CD8-positive, alpha-beta T cell (primary cell): ENCODE measurements at regions of chr11 and their contacts with region 1.

Region 1: DNA sequence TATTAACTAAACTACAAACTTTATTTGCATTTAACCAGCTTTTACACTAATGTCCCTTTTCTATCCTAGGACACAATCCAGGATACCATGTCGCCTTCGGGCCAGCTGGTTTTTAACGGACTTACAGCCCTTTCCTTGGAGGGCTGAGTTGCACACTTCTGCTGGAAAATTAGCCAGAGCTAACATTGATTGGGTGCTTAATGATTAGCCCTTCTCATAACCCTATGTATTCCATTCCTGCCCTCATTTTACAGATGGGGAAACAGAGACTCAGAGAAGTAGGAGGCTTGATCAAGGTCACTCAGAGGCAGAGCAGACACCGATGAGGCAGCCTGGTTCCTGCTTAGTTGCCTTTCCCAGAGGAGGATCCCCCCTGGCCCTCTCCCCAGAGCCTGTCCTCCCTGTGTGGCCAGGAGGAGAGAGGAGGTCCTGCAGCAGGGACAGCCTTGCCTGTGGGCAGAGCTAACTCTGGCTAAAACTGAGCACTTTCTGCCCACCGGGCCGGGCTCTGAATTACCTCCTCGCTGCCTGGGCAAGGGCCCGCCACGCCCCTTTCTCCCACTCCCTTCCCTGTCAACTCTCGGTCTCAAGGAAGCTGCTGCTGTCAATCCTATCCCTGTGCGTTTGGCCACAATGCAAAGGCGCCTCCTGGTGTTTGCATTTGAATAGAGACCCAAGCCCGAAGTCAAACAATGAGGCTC is 59.6 kb upstream of the PAX6 start:
- DNase-seq: peak in 4 of 9 experiments; percentile 3 to 32 (median 14)
- ATAC-seq: no peak
- H3K4me3 ChIP-seq: no peak overlapping the region
- H3K4me3 Mint-ChIP-seq: no peak overlapping the region
- H3K27ac ChIP-seq: no peak overlapping the region
- H3K27ac Mint-ChIP-seq: no peak overlapping the region
- H3K4me1 ChIP-seq: no peaks in the 10 kb centered on the region
- H3K4me1 Mint-ChIP-seq: no peaks in the 10 kb centered on the region
- H3K27me3 ChIP-seq: peaks cover 0 to 3% of the 10 kb centered on the region in 2 experiments
- H3K27me3 Mint-ChIP-seq: peaks cover 29% of the 10 kb centered on the region
- CTCF ChIP-seq: no peak

Region 2: GRCh38 chr11:31107062-31107461 is 763.7 kb before region 1 on chr11:
- CTCF ChIA-PET with region 1: no interaction called
- POLR2A ChIA-PET with region 1: no interaction called
- intact Hi-C with region 1: loop called in 1 of 2 experiments (anchors 10 kb)
- DNase-seq: peak in 7 of 9 experiments; percentile 7 to 48 (median 36)
- ATAC-seq: no peak
- H3K4me3 ChIP-seq: no peak overlapping the region
- H3K4me3 Mint-ChIP-seq: no peak overlapping the region
- H3K27ac ChIP-seq: no peak overlapping the region
- H3K27ac Mint-ChIP-seq: no peak overlapping the region
- H3K4me1 ChIP-seq: no peaks in the 10 kb centered on the region
- H3K4me1 Mint-ChIP-seq: no peaks in the 10 kb centered on the region
- H3K27me3 ChIP-seq: no peaks in the 10 kb centered on the region
- H3K27me3 Mint-ChIP-seq: no peaks in the 10 kb centered on the region
- CTCF ChIP-seq: peak; percentile 22

Region 3: GRCh38 chr11:31240338-31240904 is 630.3 kb before region 1 on chr11:
- CTCF ChIA-PET with region 1: interaction called, 7 read pairs
- POLR2A ChIA-PET with region 1: no interaction called
- intact Hi-C with region 1: loop called in 1 of 2 experiments (anchors 5 kb)
- DNase-seq: peak in 4 of 9 experiments; percentile 4 to 49 (median 22)
- ATAC-seq: no peak
- H3K4me3 ChIP-seq: no peak overlapping the region
- H3K4me3 Mint-ChIP-seq: no peak overlapping the region
- H3K27ac ChIP-seq: no peak overlapping the region
- H3K27ac Mint-ChIP-seq: no peak overlapping the region
- H3K4me1 ChIP-seq: no peaks in the 10 kb centered on the region
- H3K4me1 Mint-ChIP-seq: no peaks in the 10 kb centered on the region
- H3K27me3 ChIP-seq: no peaks in the 10 kb centered on the region
- H3K27me3 Mint-ChIP-seq: peaks cover 4% of the 10 kb centered on the region
- CTCF ChIP-seq: peak; percentile 58

Region 4: GRCh38 chr11:31397239-31397834 is 473.4 kb before region 1 on chr11:
- CTCF ChIA-PET with region 1: interaction called, 4 read pairs
- POLR2A ChIA-PET with region 1: no interaction called
- intact Hi-C with region 1: loop called in 1 of 2 experiments (anchors 5 kb)
- DNase-seq: peak in 2 of 9 experiments; percentile 22 to 48
- ATAC-seq: no peak
- H3K4me3 ChIP-seq: no peak overlapping the region
- H3K4me3 Mint-ChIP-seq: no peak overlapping the region
- H3K27ac ChIP-seq: no peak overlapping the region
- H3K27ac Mint-ChIP-seq: no peak overlapping the region
- H3K4me1 ChIP-seq: no peaks in the 10 kb centered on the region
- H3K4me1 Mint-ChIP-seq: no peaks in the 10 kb centered on the region
- H3K27me3 ChIP-seq: no peaks in the 10 kb centered on the region
- H3K27me3 Mint-ChIP-seq: no peaks in the 10 kb centered on the region
- CTCF ChIP-seq: peak; percentile 61

Region 5: DNA sequence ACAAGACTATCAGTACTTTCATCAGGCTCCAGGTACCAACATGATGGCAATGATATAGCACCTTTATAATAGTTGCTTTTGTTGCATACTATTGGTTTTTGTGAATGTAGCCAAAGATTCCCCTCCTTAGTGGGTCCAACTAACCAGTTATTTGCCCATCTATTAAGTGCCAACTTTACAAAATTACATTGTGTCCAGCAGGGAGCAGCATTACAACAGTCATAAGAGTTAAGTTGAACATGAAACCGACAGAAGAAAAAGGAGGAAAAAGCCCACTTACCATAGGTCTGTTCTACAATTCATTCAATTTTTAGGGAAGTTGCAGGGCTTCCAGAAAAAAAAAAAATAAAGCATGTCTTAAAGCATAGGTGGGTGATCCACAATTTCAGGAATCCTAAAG is 382.9 kb before region 1 on chr11:
- CTCF ChIA-PET with region 1: no interaction called
- POLR2A ChIA-PET with region 1: no interaction called
- intact Hi-C with region 1: loop called in 1 of 2 experiments (anchors 2 kb)
- DNase-seq: peak in 2 of 9 experiments; percentile 35 to 51
- ATAC-seq: no peak
- H3K4me3 ChIP-seq: no peak overlapping the region
- H3K4me3 Mint-ChIP-seq: no peak overlapping the region
- H3K27ac ChIP-seq: no peak overlapping the region
- H3K27ac Mint-ChIP-seq: no peak overlapping the region
- H3K4me1 ChIP-seq: no peaks in the 10 kb centered on the region
- H3K4me1 Mint-ChIP-seq: peaks cover 27% of the 10 kb centered on the region
- H3K27me3 ChIP-seq: no peaks in the 10 kb centered on the region
- H3K27me3 Mint-ChIP-seq: no peaks in the 10 kb centered on the region
- CTCF ChIP-seq: peak; percentile 43